H1 (cell line): ENCODE measurements at regions of chr17 and their contacts with region 1.

Region 1: GRCh38 chr17:56715613-56716357 is 117.9 kb downstream of the C17orf67 start:
- DNase-seq: peak in 1 of 2 experiments; percentile 89
- H3K4me3 ChIP-seq: no peak overlapping the region
- H3K27ac ChIP-seq: no peak overlapping the region
- H3K4me1 ChIP-seq: peaks cover 0 to 2% (median 0%) of the 10 kb centered on the region in 4 experiments; a peak in 1 of 7 replicates
- H3K27me3 ChIP-seq: no peaks in the 10 kb centered on the region
- CTCF ChIP-seq: peak; percentile 67 to 85 (median 81)
- EP300 ChIP-seq: no peak
- POLR2A ChIP-seq: no peak
- RAD21 ChIP-seq: peak; percentile 93 to 95

Region 2: DNA sequence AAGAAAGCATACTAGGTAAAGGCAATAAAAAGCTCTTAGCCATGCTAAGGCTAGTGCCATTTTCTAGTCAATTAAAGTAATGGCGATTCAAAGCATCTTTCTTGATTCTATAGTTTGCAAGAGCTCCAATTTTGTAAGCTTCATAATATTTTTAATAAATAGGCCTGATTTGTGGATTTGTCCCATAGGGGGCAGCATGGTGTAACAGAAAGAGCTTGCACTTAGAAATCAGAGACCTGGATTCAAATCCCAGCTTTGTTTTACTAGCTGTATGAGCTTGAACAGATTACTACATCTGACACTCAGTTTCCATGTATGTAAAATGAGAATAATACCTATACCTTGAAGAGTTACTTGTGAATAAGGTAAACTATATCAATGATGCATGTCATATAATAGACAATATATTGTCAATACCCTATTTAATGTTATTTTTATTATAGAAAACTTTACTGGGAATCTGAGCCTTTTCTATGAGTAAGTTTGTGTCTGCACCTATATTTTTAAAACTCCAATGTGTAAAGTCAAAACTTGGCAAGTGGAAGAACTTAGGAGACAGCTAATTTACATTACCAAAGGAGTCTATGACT is 215.9 kb before region 1 on chr17:
- CTCF ChIA-PET with region 1: interaction called, 52 read pairs
- POLR2A ChIA-PET with region 1: no interaction called
- DNase-seq: no peak
- H3K4me3 ChIP-seq: no peak overlapping the region
- H3K27ac ChIP-seq: no peak overlapping the region
- H3K4me1 ChIP-seq: no peaks in the 10 kb centered on the region
- H3K27me3 ChIP-seq: no peaks in the 10 kb centered on the region
- CTCF ChIP-seq: peak in 2 of 3 experiments; percentile 39 to 56; a peak in 2 of 4 replicates
- EP300 ChIP-seq: no peak
- POLR2A ChIP-seq: no peak
- RAD21 ChIP-seq: peak; percentile 76 to 80

Region 3: DNA sequence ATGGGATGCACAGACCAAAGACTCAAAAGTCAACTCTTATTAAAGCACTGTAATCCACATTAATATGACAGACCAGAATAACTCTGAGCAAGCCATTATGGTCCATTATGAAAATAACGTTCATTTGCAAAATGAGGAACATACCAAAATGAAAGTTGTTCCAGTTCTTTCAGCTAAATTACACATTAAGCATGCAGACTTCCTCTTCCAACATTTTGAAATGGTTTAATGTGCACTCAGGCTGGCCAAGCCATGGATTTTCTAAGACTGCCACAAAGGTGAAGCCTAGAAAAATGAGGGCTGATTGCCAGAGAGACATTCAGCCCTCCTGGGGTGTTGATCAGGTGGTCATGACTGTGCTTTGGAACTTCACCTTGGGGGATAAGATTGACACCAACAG is 179.0 kb before region 1 on chr17:
- CTCF ChIA-PET with region 1: no interaction called
- POLR2A ChIA-PET with region 1: no interaction called
- DNase-seq: no peak
- H3K4me3 ChIP-seq: no peak overlapping the region
- H3K27ac ChIP-seq: no peak overlapping the region
- H3K4me1 ChIP-seq: no peaks in the 10 kb centered on the region
- H3K27me3 ChIP-seq: no peaks in the 10 kb centered on the region; a peak in 1 of 7 replicates
- CTCF ChIP-seq: no peak
- EP300 ChIP-seq: no peak
- POLR2A ChIP-seq: no peak
- RAD21 ChIP-seq: no peak

Region 4: GRCh38 chr17:56592487-56593085 is 123.2 kb before region 1 on chr17:
- CTCF ChIA-PET with region 1: interaction called, 58 read pairs
- POLR2A ChIA-PET with region 1: interaction called, 4 read pairs
- DNase-seq: peak in 1 of 2 experiments; percentile 93
- H3K4me3 ChIP-seq: peak overlapping the region; percentile 39 to 75 (median 66)
- H3K27ac ChIP-seq: no peak overlapping the region
- H3K4me1 ChIP-seq: peaks cover 0 to 11% (median 4%) of the 10 kb centered on the region in 4 experiments; a peak in 5 of 7 replicates
- H3K27me3 ChIP-seq: peaks cover 12 to 49% (median 36%) of the 10 kb centered on the region in 4 experiments
- CTCF ChIP-seq: peak; percentile 86 to 96 (median 87)
- EP300 ChIP-seq: 0 out of 3 replicates have a peak, but pooled peaks of 1 of the 2 experiments have one; percentile 20
- POLR2A ChIP-seq: no peak
- RAD21 ChIP-seq: peak; percentile 74 to 93

Region 5: DNA sequence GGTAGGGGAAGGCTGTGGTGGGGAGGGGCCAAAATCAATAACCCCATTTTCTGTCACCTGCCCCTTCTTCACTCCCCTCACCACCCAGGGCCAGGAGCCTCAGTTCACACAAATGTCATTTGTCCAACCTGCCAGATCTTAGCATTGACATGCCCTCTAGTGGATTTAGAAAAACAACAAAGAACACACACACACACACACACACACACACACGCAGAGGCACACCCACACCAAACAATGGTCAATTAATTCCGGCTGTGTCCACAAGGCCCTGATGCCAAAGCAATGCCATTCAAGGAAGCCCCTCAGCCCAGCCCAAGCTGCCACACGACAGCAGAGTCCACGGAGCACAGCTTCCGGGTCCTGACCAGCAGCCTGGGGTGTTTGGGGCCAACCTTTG is 53.9 kb before region 1 on chr17:
- CTCF ChIA-PET with region 1: interaction called, 13 read pairs
- POLR2A ChIA-PET with region 1: no interaction called
- DNase-seq: no peak
- H3K4me3 ChIP-seq: no peak overlapping the region
- H3K27ac ChIP-seq: no peak overlapping the region
- H3K4me1 ChIP-seq: no peaks in the 10 kb centered on the region
- H3K27me3 ChIP-seq: no peaks in the 10 kb centered on the region
- CTCF ChIP-seq: no peak
- EP300 ChIP-seq: no peak
- POLR2A ChIP-seq: no peak
- RAD21 ChIP-seq: no peak; a peak in 1 of 4 replicates

Region 6: GRCh38 chr17:56690486-56691291 is 25.1 kb before region 1 on chr17:
- CTCF ChIA-PET with region 1: interaction called, 18 read pairs
- POLR2A ChIA-PET with region 1: no interaction called
- DNase-seq: no peak
- H3K4me3 ChIP-seq: no peak overlapping the region
- H3K27ac ChIP-seq: no peak overlapping the region
- H3K4me1 ChIP-seq: no peaks in the 10 kb centered on the region
- H3K27me3 ChIP-seq: no peaks in the 10 kb centered on the region
- CTCF ChIP-seq: no peak
- EP300 ChIP-seq: no peak
- POLR2A ChIP-seq: no peak
- RAD21 ChIP-seq: no peak

Region 7: GRCh38 chr17:56762988-56763387 is 47.2 kb after region 1 on chr17:
- CTCF ChIA-PET with region 1: interaction called, 10 read pairs
- POLR2A ChIA-PET with region 1: no interaction called
- DNase-seq: no peak
- H3K4me3 ChIP-seq: no peak overlapping the region
- H3K27ac ChIP-seq: no peak overlapping the region
- H3K4me1 ChIP-seq: no peaks in the 10 kb centered on the region
- H3K27me3 ChIP-seq: no peaks in the 10 kb centered on the region; a peak in 1 of 7 replicates
- CTCF ChIP-seq: no peak
- EP300 ChIP-seq: no peak
- POLR2A ChIP-seq: no peak
- RAD21 ChIP-seq: no peak

Region 8: DNA sequence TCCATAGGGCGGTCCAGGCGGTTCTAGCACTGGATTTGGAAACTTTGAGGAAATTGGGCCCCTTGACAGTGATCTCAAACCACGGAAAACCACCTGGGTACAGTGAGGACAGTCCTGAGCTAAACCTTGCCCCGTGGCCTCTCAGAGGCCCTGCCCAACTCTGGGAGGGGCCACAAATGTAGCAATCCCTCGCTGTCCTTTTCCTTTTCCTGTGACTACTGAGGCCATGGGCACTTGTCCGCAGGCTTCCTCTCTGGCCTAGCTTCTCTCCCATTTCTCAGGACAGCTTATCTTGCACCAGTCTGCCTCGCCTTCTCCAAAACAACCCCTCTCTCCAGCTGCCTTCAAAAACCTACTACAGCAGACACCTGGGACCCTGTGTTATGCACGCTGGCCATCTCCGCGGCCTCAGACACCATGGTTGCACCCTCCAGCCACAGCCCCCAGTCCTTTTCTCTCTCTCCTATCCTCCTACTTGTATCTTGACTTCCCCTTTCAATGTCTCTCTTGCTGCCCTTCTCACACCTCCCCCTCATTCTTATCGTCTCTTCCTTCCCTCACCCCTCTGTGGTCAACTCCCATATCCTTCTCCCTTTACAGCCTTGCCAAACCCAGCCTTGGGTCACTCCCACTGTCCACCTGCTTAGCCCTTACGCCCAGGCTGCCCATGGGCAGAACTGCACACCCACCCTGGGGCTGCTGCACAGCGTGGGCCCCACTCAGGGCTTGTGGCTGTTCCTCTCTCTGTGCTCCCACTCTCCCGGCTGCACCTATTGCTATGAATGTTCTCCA is 269.8 kb after region 1 on chr17:
- CTCF ChIA-PET with region 1: no interaction called
- POLR2A ChIA-PET with region 1: no interaction called
- DNase-seq: no peak
- H3K4me3 ChIP-seq: no peak overlapping the region
- H3K27ac ChIP-seq: no peak overlapping the region
- H3K4me1 ChIP-seq: peaks cover 0 to 4% (median under 1%) of the 10 kb centered on the region in 4 experiments; a peak in 2 of 7 replicates
- H3K27me3 ChIP-seq: no peaks in the 10 kb centered on the region
- CTCF ChIP-seq: no peak
- EP300 ChIP-seq: no peak
- POLR2A ChIP-seq: no peak
- RAD21 ChIP-seq: no peak